Posterior cingulate gyrus (tissue), 11 donors: ENCODE measurements at regions of chr2 and their contacts with region 1.

Region 1: DNA sequence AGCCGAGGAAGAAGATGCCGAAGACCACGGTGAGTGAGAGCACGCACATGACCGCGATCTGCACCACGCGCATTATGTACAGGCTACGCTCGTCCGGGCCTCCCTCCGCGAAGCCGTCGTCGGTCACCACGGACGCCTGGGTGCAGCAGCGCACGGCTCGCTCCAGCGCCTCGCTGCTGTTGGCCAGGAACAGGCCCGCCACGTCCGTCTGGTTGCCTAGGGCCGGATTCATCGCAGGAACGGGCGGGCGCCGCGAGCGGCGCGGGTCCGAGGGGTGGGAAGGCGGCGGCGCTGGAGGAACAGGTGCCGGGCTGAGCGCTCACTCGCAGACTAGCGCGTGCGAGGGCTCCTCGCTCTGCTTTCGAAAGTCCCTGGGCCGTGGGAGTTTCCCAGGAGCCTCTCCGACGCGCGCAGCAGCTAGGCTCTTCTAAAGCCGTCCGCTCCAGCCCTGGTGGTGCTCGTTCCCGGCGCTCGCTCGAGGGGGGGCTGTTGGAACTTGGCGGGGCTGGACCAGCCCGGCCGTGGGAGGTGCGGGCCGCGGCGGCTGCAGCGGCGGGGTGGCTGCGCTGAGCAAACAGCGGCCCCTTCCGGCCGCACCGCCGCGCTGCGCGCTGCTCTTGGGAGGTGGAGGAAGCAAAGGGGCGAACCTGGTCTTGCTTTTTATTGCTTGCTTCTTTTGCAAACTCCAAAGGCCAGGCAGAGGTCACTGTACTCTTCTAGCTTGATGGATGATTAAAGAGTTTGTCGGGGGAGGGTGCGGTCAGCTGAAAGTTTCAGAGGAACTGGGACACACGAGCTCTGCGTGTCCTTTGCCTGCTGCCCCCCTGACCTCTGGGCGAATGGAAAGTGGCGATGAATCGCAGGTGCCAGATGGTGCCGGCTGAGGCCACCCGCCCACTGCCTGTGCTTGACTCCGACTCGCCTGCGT is at the start of gene RPRM:
- DNase-seq: peak; percentile 55 to 96 (median 74)

Region 2: DNA sequence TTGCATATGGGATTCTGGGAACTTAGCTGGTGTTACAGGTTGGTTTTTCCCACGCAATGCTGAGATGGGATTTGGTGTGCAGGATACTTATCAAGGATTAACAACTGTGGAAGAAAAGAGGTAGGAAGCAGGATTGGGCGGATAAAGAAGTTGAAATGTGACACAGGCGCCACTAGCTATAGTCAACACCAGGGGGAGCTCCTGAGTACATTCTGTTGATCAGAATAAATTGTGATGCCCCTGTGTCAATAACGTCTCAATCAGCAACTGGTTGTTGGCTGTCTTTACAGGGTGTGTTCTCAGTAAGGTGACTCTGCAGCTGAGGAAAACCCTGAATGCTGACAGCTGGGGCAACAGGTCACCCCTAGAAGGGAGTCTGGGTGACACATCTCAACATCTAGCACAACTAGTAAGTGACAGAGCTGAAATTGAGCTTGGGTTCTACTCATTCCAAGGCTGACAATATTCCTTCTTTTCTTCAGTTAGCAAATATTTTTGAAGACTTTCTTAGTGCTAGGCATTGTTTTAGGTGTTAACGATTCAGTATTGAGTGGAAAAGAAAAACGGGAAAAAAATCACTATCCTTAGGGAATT is 617.2 kb before region 1 on chr2:
- intact Hi-C with region 1: loop called (anchors 2 kb)
- DNase-seq: no peak

Region 3: DNA sequence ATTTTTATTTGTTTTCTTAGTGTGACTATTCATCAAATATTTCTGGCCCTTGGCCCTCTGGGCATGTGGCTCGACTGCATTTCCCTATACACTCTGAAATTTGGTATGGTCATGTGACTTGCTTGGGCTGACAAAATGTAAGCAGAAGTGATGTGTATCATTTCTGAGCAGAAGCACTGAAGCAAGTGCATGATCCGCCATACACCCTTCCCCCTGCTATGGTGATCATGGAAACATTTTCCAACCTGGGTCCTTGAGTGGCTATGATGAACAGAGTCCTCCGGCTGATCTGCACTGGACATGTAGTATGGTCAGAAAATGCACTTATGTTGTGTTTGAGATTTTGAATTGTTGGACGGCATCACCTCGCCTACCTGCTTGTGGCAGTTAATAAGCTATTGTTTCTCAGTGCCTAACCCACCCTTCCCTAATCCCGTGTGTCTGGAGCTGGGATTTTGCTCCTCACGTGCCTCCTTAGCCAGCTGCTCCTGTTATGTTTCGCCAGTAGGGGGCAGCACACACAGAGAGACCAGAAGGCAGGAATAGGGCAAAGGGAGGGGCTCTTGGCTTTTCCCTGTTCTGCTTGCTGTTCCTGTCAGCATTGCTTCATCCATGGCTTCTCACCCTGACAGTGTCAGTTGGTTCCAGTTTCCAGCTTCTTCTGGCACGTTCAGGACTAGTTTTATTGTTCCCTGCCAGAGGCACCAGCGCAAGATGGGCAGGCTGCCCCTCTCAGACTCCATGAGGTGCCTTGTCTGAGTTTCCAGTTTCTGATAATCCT is 552.9 kb before region 1 on chr2:
- intact Hi-C with region 1: loop called (anchors 2 kb)
- DNase-seq: peak in 7 of 10 donors; percentile 33 to 89 (median 60)

Region 4: DNA sequence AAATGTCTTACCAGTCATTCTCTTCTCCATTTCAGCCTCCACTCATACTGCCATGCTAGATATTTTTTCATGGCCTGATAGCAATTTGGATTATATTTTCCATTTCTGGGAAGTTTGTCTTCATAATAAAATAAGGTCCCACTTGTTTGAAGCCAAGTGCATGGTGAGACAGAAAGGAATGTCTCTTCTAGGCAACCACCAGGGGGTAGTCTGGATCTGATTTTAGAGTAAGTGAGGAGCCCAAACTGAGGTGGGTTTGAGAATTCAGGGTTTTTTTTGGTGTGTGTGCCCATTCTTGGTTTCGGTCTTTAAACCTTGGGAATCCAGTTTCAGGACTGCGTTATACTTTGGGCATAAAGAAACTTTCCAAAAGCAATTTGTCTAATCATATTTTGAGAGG is 315.5 kb before region 1 on chr2:
- intact Hi-C with region 1: loop called (anchors 2 kb)
- DNase-seq: peak in 2 of 10 donors; percentile 2 to 12